HepG2 (cell line): ENCODE measurements at regions of chr15 and their contacts with region 1.

Region 1: DNA sequence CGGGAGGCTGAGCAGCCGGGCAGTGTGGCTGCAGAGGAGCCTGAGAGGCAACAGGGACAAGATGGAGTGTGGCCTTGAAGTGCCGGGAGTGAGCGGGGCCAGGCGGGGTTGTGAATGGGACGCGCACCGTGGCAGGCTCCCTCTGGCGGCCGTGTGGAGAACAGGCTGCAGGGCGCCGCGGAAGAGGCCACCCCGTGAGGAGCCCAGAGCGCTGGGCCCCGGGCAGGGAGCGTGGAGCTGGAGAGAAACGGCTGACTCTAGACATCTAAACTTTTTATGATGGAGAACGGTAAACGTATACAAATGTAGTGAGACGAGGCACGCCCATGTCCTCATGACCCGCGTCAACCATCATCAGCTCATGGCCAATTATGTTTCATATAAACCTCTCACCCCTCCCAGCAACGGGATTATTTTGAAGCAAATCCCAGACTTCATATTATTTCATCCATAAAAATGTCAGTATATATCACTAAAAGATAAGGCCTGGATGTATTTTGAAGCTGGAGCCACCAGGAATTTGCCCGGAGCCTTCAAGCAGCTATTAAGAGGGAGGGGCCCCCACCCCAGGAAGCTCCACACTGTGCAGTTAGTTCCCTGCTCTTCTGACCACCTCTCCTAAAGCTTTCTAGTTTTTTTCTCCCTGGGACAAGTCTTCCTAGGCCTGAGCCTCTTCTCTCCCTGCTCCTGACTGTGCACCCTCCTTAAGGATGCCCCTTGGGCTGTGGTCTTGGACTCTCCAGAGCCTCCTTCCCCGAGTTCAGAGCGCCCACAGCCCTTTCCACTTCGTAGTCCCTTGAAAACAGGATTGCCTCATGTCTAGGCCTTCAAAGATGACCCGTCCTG is 149.4 kb downstream of the SMAD6 start:
- DNase-seq: peak; percentile 32
- ATAC-seq: peak; percentile 87
- H3K4me3 ChIP-seq: peak overlapping the region in 1 of 3 experiments; percentile 48; a peak in 3 of 6 replicates
- H3K27ac ChIP-seq: no peak overlapping the region
- H3K4me1 ChIP-seq: peaks cover 36% of the 10 kb centered on the region
- H3K27me3 ChIP-seq: peaks cover 4 to 16% of the 10 kb centered on the region in 2 experiments; a peak in 4 of 5 replicates
- CTCF ChIP-seq: peak; percentile 95
- EP300 ChIP-seq: no peak
- POLR2A ChIP-seq: no peak
- RAD21 ChIP-seq: peak; percentile 83

Region 2: DNA sequence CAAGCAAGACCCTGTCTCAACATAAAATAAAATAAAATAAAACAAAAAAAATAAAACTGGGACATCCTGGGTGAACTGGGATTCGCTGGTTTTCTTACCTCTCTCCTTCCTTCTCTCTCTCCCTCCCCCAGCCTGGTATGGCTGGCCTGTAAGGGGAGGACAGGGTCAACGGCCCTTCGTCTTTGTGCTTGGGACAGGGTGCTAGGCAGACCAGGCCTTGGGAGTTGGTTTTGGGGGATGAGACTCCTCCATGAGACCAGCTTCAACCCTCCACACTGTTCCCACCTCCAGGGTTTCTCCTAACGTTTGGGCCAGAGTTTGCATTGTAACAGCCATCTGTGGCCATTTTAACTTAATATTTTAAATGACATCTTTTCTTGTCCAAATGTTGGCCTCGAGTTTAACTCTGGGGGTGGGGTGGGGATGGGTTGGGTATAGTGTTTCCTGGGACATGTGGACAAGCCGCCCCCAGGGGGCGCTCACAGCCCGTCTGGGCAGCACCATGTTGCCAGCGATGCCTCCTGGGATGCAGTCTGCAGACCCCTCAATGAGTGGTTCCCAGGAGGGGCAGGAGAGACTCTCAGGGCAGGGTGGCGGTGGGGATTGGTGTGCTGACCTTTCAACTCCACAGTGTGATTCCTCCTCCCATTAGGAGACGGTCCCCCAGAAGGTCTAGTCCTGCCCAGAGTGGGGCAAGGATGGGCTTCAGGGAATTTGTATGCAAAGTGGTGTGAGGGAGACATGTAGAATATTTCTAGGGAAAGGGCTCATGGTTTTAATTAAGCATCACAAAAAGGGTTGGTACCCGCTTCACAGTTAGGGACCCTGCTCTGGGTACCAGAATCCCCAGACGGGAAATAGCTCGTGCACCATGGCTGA is 247.9 kb before region 1 on chr15:
- CTCF ChIA-PET with region 1: interaction called, 19 read pairs
- POLR2A ChIA-PET with region 1: no interaction called
- in situ Hi-C with region 1: loop called (anchors 5 kb)
- intact Hi-C with region 1: loop called (anchors 1 kb)
- DNase-seq: peak; percentile 40
- ATAC-seq: peak; percentile 92
- H3K4me3 ChIP-seq: no peak overlapping the region
- H3K27ac ChIP-seq: no peak overlapping the region
- H3K4me1 ChIP-seq: no peaks in the 10 kb centered on the region
- H3K27me3 ChIP-seq: no peaks in the 10 kb centered on the region; a peak in 1 of 5 replicates
- CTCF ChIP-seq: peak; percentile 88
- EP300 ChIP-seq: no peak
- POLR2A ChIP-seq: no peak
- RAD21 ChIP-seq: peak; percentile 89

Region 3: DNA sequence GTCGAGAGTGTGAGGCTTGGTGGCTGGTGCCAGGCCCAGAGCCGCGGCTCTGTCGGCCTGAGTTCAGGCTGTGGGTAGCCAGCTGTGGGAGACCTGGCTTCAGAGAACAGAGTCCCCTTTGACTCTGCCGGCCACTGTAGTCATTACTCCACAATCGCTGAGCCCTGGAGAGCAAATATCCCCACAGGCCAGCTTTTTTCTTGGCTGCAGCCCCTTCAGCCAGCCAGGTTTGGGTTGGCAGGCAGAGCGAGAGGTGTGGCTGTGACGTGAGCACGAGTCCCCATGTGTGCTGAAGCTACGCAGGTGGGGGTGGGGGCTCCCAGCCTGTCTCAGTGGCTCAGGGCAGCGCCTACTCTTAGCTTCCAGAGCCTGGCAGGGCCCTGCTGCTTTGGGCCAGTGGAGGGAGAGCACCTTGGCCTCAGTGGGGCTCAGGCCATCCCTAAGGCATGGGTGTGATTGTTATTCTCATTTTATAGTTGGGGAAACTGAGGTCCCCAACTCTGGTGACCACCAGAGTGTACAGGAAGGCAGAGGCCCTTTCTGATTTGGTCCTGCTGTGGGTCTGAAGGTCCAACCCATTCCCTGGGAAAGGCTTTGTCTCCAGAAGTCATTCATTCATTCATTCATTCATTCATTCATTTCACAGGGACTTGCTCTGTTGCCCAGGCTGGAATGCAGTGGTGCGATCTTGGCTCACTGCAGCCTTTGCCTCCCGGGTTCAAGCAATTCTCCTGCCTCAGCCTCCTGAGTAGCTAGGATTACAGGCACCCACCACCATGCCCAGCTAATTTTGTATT is 240.0 kb before region 1 on chr15:
- CTCF ChIA-PET with region 1: no interaction called
- POLR2A ChIA-PET with region 1: no interaction called
- in situ Hi-C with region 1: no loop called
- intact Hi-C with region 1: loop called (anchors 2 kb)
- DNase-seq: peak; percentile 81
- ATAC-seq: peak; percentile 98
- H3K4me3 ChIP-seq: peak overlapping the region in 1 of 3 experiments; percentile 18; a peak in 1 of 6 replicates
- H3K27ac ChIP-seq: no peak overlapping the region
- H3K4me1 ChIP-seq: peaks cover 13% of the 10 kb centered on the region
- H3K27me3 ChIP-seq: peaks cover 0 to 2% of the 10 kb centered on the region in 2 experiments; a peak in 2 of 5 replicates
- CTCF ChIP-seq: no peak
- EP300 ChIP-seq: no peak
- POLR2A ChIP-seq: no peak
- RAD21 ChIP-seq: no peak

Region 4: DNA sequence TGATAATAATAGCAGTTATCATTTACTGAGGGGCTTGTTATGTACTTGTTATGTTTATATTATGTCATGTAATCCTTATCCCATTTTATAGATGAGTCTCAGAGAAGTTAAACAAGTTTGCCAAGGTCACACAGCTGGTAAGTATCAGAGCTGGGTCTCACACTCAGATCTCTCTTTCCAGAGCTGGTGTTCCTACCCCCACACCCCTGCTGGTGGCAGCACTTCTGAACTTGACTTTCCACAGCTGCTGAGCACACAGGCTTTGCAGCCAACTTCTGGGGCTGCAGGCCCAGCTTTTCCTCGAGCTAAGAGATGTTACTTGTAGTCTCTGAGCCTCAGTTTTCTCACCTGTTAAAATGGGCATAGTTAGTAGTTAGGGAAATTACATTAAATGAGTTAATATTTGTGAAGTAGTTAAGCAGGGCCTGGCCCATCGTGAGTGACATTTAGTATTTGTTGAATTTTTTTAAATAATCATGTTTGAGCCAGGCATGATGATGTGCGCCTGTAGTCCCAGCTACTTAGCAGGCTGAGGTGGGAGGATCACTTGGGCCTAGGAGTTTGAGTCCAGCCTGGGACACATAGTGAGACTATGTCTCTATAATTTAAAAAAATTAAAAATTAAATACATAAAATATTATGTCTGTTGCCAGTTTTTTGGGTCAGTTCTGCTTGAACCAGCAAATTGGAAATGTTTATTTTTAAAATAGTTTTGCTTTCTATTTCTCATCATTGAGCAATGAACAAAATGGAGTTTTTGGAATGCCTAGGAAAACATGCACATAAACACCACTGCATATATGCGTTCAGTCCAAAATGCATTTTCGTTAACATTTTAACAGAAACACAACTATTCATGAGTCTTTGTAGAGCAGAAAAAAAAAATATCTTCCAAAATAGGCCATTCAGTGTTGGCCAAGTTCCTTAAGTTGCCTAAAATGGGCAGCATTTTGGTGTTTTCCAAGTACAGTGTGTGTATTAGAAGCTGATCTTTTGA is 62.1 kb before region 1 on chr15:
- CTCF ChIA-PET with region 1: interaction called, 11 read pairs
- POLR2A ChIA-PET with region 1: no interaction called
- in situ Hi-C with region 1: loop called (anchors 10 kb)
- intact Hi-C with region 1: loop called (anchors 1 kb)
- DNase-seq: peak; percentile 30
- ATAC-seq: peak; percentile 79
- H3K4me3 ChIP-seq: no peak overlapping the region
- H3K27ac ChIP-seq: no peak overlapping the region
- H3K4me1 ChIP-seq: peaks cover 9% of the 10 kb centered on the region
- H3K27me3 ChIP-seq: no peaks in the 10 kb centered on the region
- CTCF ChIP-seq: peak; percentile 62
- EP300 ChIP-seq: no peak
- POLR2A ChIP-seq: no peak
- RAD21 ChIP-seq: no peak; the same call in 1 of the 2 replicates